ENCODE measurements at regions of chr6 and their contacts with region 1.

Region 1: GRCh38 chr6:28266962-28267694 is at the start of gene ZSCAN26:
- DNase-seq: peak; percentile 76 to 93 (median 88)
- ATAC-seq: peak; percentile 95
- H3K4me3 ChIP-seq: peak within 1 kb of the TSS; percentile 92 to 97
- H3K4me3 Mint-ChIP-seq: no peak within 1 kb of the TSS
- H3K27ac ChIP-seq: peak within 1 kb of the TSS; percentile 77 to 87
- H3K27ac Mint-ChIP-seq: no peak within 1 kb of the TSS
- H3K4me1 ChIP-seq: peaks cover 21% of the 10 kb centered on the region
- H3K4me1 Mint-ChIP-seq: peaks cover 31% of the 10 kb centered on the region
- H3K27me3 ChIP-seq: no peaks in the 10 kb centered on the region
- H3K27me3 Mint-ChIP-seq: no peaks in the 10 kb centered on the region
- CTCF ChIP-seq: no peak
- total RNA-seq, gene ZSCAN26: 11.1 to 14.7 TPM

Region 2: DNA sequence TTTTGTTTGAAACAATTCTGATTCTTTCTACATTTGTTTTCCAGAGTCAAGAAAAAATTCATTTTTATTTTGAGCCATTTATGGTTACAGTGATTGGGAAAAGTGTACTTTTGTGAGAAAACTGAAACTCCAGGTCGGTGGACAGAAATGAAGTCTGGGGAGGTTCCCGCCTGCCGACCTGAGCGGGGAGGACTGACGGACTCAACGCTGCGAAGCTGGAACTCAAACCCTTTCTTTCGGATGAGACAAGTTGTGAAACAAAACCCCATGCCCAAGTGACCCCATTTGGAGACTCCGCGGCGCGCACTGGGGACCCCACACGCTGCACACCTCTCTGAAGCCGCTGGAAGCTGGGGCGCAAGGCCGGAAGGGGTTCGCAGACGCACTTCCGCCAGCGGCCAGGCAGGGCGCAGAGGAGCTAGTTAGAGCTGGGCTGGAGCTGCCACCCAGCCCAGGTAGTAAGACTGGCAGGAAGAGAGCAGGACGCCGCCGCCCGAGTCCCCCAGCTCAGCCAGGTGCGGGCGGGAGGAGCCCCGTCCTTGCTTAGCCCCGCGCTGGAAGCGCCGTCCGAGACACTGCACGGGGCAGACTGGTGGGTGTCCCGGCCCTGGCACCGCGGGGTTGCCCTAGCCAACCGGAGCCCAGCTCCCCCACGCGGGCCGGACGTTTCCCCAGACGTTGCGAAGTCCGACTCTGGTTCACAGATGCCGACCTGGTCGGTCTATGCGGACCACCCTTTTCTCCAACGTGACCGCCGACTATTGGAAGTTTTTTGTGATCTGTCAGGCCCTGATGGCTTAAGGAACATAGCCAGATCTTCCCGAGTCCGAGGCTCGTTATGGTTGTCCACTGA is 162.5 kb before region 1 on chr6:
- CTCF ChIA-PET with region 1: no interaction called
- POLR2A ChIA-PET with region 1: interaction called, 7 read pairs
- intact Hi-C with region 1: loop called in 1 of 2 experiments (anchors 1 kb)
- DNase-seq: peak; percentile 76 to 93 (median 85)
- ATAC-seq: peak; percentile 99
- H3K4me3 ChIP-seq: peak overlapping the region; percentile 69 to 73
- H3K4me3 Mint-ChIP-seq: peak overlapping the region; percentile 90
- H3K27ac ChIP-seq: peak overlapping the region; percentile 53 to 83
- H3K27ac Mint-ChIP-seq: peak overlapping the region; percentile 89
- H3K4me1 ChIP-seq: peaks cover 5% of the 10 kb centered on the region
- H3K4me1 Mint-ChIP-seq: peaks cover 11% of the 10 kb centered on the region
- H3K27me3 ChIP-seq: no peaks in the 10 kb centered on the region
- H3K27me3 Mint-ChIP-seq: peaks cover under 1% of the 10 kb centered on the region
- CTCF ChIP-seq: peak; percentile 60

Region 3: DNA sequence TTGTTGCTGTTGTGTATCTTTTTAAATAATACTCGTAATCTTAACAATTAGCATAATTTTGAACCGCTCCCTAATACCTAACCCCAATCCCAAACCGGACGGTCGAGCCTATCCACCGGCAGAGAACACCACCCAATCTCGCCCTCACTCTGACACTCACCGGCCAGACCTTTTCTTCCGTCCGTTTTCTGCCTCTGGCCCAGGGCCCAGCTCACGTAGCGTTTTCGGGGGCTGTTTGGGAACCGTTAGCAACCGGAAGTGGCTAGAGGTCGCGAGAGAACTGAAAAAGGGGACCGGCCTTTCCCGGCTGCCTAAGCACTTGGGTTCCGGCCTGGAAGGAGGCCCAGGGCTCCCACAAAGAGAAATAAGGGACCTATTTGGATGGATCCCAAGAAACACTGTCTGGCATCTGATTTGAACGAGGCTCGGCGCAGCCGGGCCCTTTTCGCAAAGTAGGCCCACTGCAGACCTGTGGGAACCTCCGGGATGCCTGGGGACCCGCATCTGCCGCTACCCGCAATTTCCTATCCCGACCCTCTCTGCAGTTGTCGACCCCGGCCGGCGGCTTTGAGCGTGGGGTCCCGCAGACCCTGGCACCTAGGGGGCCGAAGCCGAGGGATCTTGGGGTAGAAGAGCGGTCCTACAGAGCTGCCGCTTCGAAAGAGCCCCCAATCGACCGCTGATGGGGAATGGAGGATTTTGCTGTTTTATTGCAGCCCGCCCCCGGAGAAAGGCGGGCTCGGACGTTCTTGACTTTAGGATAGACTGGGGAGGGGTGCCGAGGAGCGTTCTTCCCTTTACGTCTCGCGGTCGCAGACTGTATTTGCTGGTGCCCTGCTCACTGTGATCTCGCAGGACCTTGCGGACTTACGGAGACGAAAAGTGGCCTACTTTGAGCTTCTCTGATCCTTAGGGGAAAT is 130.3 kb before region 1 on chr6:
- CTCF ChIA-PET with region 1: interaction called, 3 read pairs
- POLR2A ChIA-PET with region 1: interaction called, 4 read pairs
- intact Hi-C with region 1: loop called (anchors 5 kb)
- DNase-seq: peak; percentile 52 to 91 (median 77)
- ATAC-seq: peak; percentile 35
- H3K4me3 ChIP-seq: peak overlapping the region; percentile 79 to 88
- H3K4me3 Mint-ChIP-seq: peak overlapping the region; percentile 94
- H3K27ac ChIP-seq: peak overlapping the region; percentile 87 to 92
- H3K27ac Mint-ChIP-seq: peak overlapping the region; percentile 99
- H3K4me1 ChIP-seq: peaks cover 28% of the 10 kb centered on the region
- H3K4me1 Mint-ChIP-seq: peaks cover 71% of the 10 kb centered on the region
- H3K27me3 ChIP-seq: no peaks in the 10 kb centered on the region
- H3K27me3 Mint-ChIP-seq: no peaks in the 10 kb centered on the region
- CTCF ChIP-seq: no peak

Region 4: DNA sequence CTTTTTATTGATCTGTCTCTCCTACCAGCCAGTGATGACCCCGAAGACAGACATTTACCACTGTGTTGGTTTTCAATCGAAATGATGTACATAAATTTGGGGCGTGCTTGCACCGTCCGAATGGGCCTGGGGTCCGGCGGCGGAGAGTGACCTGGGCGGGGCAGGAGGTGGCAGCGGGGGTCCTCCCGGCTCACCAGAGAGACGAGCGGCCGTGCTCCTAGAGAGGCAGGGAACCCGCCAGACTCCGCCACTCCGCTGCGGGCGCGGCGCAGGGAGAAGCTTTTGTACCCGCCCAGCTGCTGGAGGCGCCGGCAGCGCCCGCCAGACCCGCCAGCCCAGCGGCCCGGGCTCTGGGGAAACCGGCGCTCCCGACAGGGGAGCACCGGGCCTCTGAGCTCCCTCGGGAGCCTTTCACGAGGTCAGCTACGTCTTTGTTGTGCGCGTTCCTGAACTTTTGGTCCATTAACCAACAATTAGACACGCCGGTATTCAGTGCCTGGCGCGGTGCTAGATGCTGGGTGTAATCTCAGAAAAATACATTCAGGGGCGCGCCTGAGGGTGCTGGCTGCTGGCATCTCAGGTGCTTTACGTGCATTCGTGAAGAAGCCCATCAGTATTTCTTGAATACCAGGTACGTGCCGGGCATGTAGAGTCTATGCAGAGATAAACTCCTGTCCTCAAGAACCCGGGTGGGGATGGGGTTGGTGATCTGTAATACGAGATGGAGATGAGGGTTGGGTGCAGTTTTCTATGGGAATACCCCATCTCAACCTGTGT is 14.3 kb after region 1 on chr6 and contains the start of gene PGBD1:
- CTCF ChIA-PET with region 1: interaction called, 4 read pairs
- POLR2A ChIA-PET with region 1: interaction called, 11 read pairs
- intact Hi-C with region 1: loop called in 1 of 2 experiments (anchors 2 kb)
- DNase-seq: peak; percentile 3 to 69 (median 48)
- ATAC-seq: peak; percentile 80
- H3K4me3 ChIP-seq: peak within 1 kb of the TSS; percentile 51 to 52
- H3K4me3 Mint-ChIP-seq: peak within 1 kb of the TSS; percentile 83
- H3K27ac ChIP-seq: no peak within 1 kb of the TSS
- H3K27ac Mint-ChIP-seq: no peak within 1 kb of the TSS
- H3K4me1 ChIP-seq: peaks cover 9% of the 10 kb centered on the region
- H3K4me1 Mint-ChIP-seq: peaks cover 12% of the 10 kb centered on the region
- H3K27me3 ChIP-seq: no peaks in the 10 kb centered on the region
- H3K27me3 Mint-ChIP-seq: peaks cover 14% of the 10 kb centered on the region
- CTCF ChIP-seq: no peak
- total RNA-seq, gene PGBD1: 0.75 to 0.95 TPM

Region 5: GRCh38 chr6:28355743-28356665 is 88.9 kb after region 1 on chr6:
- CTCF ChIA-PET with region 1: interaction called, 11 read pairs
- POLR2A ChIA-PET with region 1: interaction called, 9 read pairs
- intact Hi-C with region 1: no loop called
- DNase-seq: peak in 8 of 9 experiments; percentile 32 to 85 (median 62)
- ATAC-seq: peak; percentile 91
- H3K4me3 ChIP-seq: peak overlapping the region; percentile 39 to 65
- H3K4me3 Mint-ChIP-seq: peak overlapping the region; percentile 90
- H3K27ac ChIP-seq: peak overlapping the region in 1 of 2 experiments; percentile 27
- H3K27ac Mint-ChIP-seq: peak overlapping the region; percentile 52
- H3K4me1 ChIP-seq: peaks cover 17% of the 10 kb centered on the region
- H3K4me1 Mint-ChIP-seq: peaks cover 33% of the 10 kb centered on the region
- H3K27me3 ChIP-seq: no peaks in the 10 kb centered on the region
- H3K27me3 Mint-ChIP-seq: no peaks in the 10 kb centered on the region
- CTCF ChIP-seq: peak; percentile 83

Region 6: DNA sequence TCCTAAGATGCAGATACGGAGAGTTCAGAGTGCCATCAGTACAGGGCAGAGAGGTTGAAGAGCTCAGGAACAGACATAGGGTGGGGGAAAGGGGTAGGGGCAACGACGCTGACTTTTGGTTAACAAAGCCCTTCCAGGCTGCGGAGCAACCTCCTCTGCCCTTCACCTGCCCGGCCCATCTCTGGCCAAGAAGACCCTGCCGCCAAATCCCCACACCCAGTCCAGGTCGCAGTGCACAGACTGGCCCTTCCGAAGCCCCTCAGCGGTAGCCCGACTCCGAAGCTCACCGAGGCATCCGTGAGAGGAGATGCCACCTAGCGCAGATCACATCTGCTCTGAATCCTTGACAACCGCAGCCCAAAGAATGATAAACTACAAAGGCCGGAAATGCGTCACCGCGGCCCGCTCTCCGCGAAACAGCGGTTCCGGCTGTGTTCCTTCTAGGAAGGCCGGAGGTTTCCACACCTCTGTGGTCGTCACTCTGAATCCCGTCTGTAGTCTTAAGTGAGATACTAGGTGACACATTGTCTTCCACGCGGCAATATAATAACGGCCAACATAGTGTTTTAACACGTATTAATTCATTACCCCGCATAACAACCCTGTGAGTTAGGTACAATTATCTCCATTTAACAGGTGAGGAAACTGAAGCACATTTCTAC is 176.1 kb after region 1 on chr6 and contains the start of gene ZSCAN23:
- CTCF ChIA-PET with region 1: no interaction called
- POLR2A ChIA-PET with region 1: interaction called, 3 read pairs
- intact Hi-C with region 1: loop called in 1 of 2 experiments (anchors 2 kb)
- DNase-seq: peak; percentile 69 to 95 (median 85)
- ATAC-seq: peak; percentile 90
- H3K4me3 ChIP-seq: peak within 1 kb of the TSS; percentile 53 to 63
- H3K4me3 Mint-ChIP-seq: peak within 1 kb of the TSS; percentile 89
- H3K27ac ChIP-seq: peak within 1 kb of the TSS; percentile 52 to 54
- H3K27ac Mint-ChIP-seq: peak within 1 kb of the TSS; percentile 89
- H3K4me1 ChIP-seq: peaks cover 28% of the 10 kb centered on the region
- H3K4me1 Mint-ChIP-seq: peaks cover 31% of the 10 kb centered on the region
- H3K27me3 ChIP-seq: peaks cover 0 to 11% of the 10 kb centered on the region in 2 experiments
- H3K27me3 Mint-ChIP-seq: peaks cover 38% of the 10 kb centered on the region
- CTCF ChIP-seq: no peak
- total RNA-seq, gene ZSCAN23: not detected

Region 7: GRCh38 chr6:29809249-29809648 is 1542.1 kb after region 1 on chr6:
- CTCF ChIA-PET with region 1: no interaction called
- POLR2A ChIA-PET with region 1: no interaction called
- intact Hi-C with region 1: no loop called
- DNase-seq: no peak
- ATAC-seq: no peak
- H3K4me3 ChIP-seq: no peak overlapping the region
- H3K4me3 Mint-ChIP-seq: no peak overlapping the region
- H3K27ac ChIP-seq: no peak overlapping the region
- H3K27ac Mint-ChIP-seq: no peak overlapping the region
- H3K4me1 ChIP-seq: no peaks in the 10 kb centered on the region
- H3K4me1 Mint-ChIP-seq: no peaks in the 10 kb centered on the region
- H3K27me3 ChIP-seq: peaks cover 6 to 7% of the 10 kb centered on the region in 2 experiments
- H3K27me3 Mint-ChIP-seq: peaks cover 16% of the 10 kb centered on the region
- CTCF ChIP-seq: no peak